Calu3 (cell line): ENCODE measurements at regions of chrX and their contacts with region 1.

Region 1: GRCh38 chrX:32170481-32170880 is 1040.9 kb downstream of the DMD start:
- DNase-seq: no peak
- H3K4me3 Mint-ChIP-seq: no peak overlapping the region
- H3K27ac Mint-ChIP-seq: no peak overlapping the region
- H3K4me1 Mint-ChIP-seq: no peaks in the 10 kb centered on the region
- H3K27me3 Mint-ChIP-seq: no peaks in the 10 kb centered on the region
- CTCF ChIP-seq: no peak

Region 2: GRCh38 chrX:31555506-31555905 is 615.0 kb before region 1 on chrX:
- CTCF ChIA-PET with region 1: no interaction called
- intact Hi-C with region 1: loop called (anchors 10 kb)
- DNase-seq: no peak
- H3K4me3 Mint-ChIP-seq: no peak overlapping the region
- H3K27ac Mint-ChIP-seq: no peak overlapping the region
- H3K4me1 Mint-ChIP-seq: no peaks in the 10 kb centered on the region
- H3K27me3 Mint-ChIP-seq: no peaks in the 10 kb centered on the region
- CTCF ChIP-seq: no peak